ENCODE measurements at regions of chr3 and their contacts with region 1.

Region 1: DNA sequence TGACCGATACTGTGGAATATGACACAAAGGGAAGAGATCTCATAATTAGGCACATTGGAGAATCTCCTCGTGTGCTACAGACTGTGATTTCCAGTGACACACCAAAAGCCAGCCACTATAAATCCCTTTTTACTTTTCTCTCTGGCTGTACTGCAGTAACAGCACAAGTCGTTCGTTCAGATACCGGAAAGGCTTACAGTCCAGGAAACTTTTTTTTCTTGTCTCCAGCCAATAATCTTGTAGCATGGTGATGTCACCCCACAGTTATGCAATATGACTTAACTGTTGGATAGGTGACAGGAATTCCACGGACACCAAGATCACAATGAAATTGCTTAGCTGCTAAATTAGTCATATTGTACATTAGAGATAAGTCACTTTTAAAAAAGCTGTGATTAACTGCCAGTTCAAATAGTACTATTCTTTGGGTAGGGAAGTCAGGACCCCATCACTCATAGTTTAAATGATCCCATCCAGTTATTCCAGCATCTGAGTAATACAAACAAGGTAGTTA is 36.3 kb upstream of the TSC22D2 start:
- DNase-seq: peak; percentile 98
- H3K4me3 ChIP-seq: peak overlapping the region; percentile 35 to 57 (median 44)
- H3K27ac ChIP-seq: peak overlapping the region; percentile 96
- H3K4me1 ChIP-seq: peaks cover 23% of the 10 kb centered on the region
- H3K27me3 ChIP-seq: no peaks in the 10 kb centered on the region
- CTCF ChIP-seq: no peak

Region 2: DNA sequence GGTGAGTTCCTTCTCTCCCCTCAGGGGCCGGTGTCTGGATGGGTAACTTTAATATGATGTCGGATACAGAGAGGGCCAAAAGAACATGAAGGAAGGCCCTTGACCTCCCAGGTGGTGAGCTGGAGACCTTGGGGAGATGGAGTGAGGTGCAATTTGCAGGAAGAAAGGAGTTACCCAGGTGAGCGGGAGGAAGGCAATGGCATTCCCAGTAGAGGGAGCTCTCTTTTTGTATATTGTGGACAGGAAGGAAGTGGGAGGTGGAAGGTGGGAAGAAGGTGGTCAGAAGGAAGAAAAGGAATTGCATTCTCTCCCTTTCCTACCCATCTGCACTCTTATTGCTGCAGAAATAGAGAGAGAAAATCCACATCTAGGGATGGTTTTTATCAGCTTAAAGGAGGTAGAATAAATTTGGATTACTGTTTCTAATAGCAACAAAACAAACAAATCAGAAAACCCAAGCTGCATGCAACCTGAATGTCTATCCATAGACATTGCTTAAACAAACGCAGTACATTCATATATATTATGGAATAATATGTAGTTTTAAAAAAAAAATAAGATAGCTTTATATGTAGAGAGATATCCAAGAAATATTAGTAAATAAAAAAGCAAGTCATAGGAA is 132.7 kb before region 1 on chr3:
- CTCF ChIA-PET with region 1: interaction called, 4 read pairs
- dilution Hi-C with region 1: no loop called
- in situ Hi-C with region 1: no loop called
- intact Hi-C with region 1: loop called (anchors 1 kb)
- DNase-seq: peak; percentile 59
- H3K4me3 ChIP-seq: no peak overlapping the region
- H3K27ac ChIP-seq: no peak overlapping the region
- H3K4me1 ChIP-seq: peaks cover 38% of the 10 kb centered on the region
- H3K27me3 ChIP-seq: no peaks in the 10 kb centered on the region
- CTCF ChIP-seq: peak; percentile 62 to 72

Region 3: DNA sequence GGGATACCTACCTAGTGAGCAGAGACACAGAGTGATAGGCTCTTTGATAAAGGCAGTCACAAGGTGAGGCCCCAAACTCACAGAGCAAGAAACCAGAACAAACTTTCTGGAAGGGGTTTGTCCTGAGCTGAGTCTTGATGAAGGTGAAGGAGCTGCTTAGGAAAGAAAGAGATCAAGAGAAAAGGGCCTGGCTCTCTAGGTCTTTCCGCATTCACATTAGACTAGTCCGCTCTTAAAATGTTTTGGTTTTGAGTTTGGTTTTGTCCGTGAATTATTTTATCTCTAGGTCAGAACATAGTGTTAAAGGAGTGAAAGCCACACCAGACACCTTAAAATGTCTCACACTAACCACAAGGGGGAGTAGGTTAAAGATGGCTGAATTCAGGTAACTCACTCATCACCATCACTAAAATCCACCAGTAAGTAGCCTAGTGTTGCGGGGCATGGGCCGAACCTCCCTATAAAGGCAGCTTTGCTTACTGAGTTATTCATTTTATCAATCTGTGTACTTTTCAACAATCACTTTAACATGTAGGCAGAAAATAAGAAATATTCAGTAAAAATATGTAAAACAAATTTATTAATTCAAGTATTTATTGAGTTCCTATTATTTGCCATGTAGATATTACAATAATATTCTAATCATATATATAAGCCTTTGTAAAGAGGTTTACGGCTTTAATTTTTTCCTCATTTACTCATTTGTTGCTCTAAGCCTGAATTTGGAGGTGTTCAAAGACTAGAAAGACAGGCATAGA is 85.2 kb before region 1 on chr3:
- CTCF ChIA-PET with region 1: no interaction called
- dilution Hi-C with region 1: no loop called
- in situ Hi-C with region 1: no loop called
- intact Hi-C with region 1: loop called (anchors 1 kb)
- DNase-seq: peak; percentile 56
- H3K4me3 ChIP-seq: no peak overlapping the region
- H3K27ac ChIP-seq: no peak overlapping the region
- H3K4me1 ChIP-seq: peaks cover 4% of the 10 kb centered on the region
- H3K27me3 ChIP-seq: no peaks in the 10 kb centered on the region
- CTCF ChIP-seq: peak; percentile 57 to 72

Region 4: DNA sequence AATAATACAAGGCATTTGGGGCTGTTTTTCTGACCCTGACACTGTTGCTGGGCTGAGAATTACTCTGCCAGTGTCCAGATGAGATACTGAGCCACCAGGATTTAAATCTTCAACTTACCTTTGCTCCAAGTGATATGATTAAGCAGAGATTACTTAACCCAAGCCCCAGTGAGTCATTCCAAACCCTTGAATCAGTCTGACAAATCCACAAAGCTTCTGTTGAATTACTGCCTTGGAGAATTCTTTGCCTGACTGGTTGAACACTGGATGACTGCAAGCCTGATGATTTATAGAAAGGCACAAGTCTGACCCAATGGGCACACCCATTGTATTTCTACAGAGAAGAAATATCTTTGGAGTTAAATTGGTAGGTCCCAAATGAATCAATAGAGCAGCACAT is 51.9 kb before region 1 on chr3:
- CTCF ChIA-PET with region 1: no interaction called
- dilution Hi-C with region 1: no loop called
- in situ Hi-C with region 1: no loop called
- intact Hi-C with region 1: loop called (anchors 2 kb)
- DNase-seq: peak; percentile 98
- H3K4me3 ChIP-seq: no peak overlapping the region
- H3K27ac ChIP-seq: peak overlapping the region; percentile 66
- H3K4me1 ChIP-seq: peaks cover 7% of the 10 kb centered on the region
- H3K27me3 ChIP-seq: no peaks in the 10 kb centered on the region
- CTCF ChIP-seq: no peak

Region 5: DNA sequence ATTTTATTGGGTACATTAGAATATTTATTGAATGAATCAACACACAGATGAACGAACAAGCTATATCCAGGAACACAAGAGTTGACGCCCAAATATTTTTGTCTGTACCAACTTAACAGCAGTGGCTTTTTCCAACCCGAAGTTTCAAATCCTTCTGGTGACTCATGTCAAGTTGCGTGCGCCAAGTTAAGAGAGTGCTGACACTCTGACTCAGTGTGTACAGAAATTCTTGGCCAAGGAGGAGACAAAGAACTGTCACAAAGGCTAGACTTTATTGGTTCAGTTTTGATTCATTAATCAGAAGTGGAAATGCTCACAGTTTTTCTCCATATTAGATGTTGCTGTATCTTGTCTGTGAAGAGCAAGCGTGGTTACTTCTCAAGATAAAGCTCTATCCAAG is 23.3 kb before region 1 on chr3:
- CTCF ChIA-PET with region 1: no interaction called
- dilution Hi-C with region 1: no loop called
- in situ Hi-C with region 1: no loop called
- intact Hi-C with region 1: loop called (anchors 1 kb)
- DNase-seq: peak; percentile 95
- H3K4me3 ChIP-seq: no peak overlapping the region
- H3K27ac ChIP-seq: peak overlapping the region; percentile 93
- H3K4me1 ChIP-seq: peaks cover 84% of the 10 kb centered on the region
- H3K27me3 ChIP-seq: no peaks in the 10 kb centered on the region
- CTCF ChIP-seq: no peak

Region 6: GRCh38 chr3:150495563-150496168 is 123.9 kb after region 1 on chr3:
- CTCF ChIA-PET with region 1: no interaction called
- dilution Hi-C with region 1: no loop called
- in situ Hi-C with region 1: no loop called
- intact Hi-C with region 1: loop called (anchors 2 kb)
- DNase-seq: peak; percentile 29
- H3K4me3 ChIP-seq: no peak overlapping the region
- H3K27ac ChIP-seq: no peak overlapping the region
- H3K4me1 ChIP-seq: no peaks in the 10 kb centered on the region
- H3K27me3 ChIP-seq: no peaks in the 10 kb centered on the region
- CTCF ChIP-seq: peak; percentile 59 to 60

Region 7: GRCh38 chr3:150567328-150567727 is 195.5 kb after region 1 on chr3:
- CTCF ChIA-PET with region 1: no interaction called
- dilution Hi-C with region 1: no loop called
- in situ Hi-C with region 1: no loop called
- intact Hi-C with region 1: no loop called
- DNase-seq: no peak
- H3K4me3 ChIP-seq: no peak overlapping the region
- H3K27ac ChIP-seq: no peak overlapping the region
- H3K4me1 ChIP-seq: no peaks in the 10 kb centered on the region
- H3K27me3 ChIP-seq: no peaks in the 10 kb centered on the region
- CTCF ChIP-seq: no peak

Measured in mammary epithelial cell (primary cell).